HepG2 (cell line): ENCODE measurements at regions of chr11 and their contacts with region 1.

Region 1: GRCh38 chr11:61332797-61333549 is at the starts of genes DDB1 and TKFC:
- DNase-seq: peak; percentile 89
- ATAC-seq: peak; percentile 84
- H3K4me3 ChIP-seq: peak within 1 kb of the TSS; percentile 95 to 98 (median 96)
- H3K27ac ChIP-seq: peak within 1 kb of the TSS; percentile 91
- H3K4me1 ChIP-seq: peaks cover 70% of the 10 kb centered on the region
- H3K27me3 ChIP-seq: no peaks in the 10 kb centered on the region; a peak in 1 of 5 replicates
- CTCF ChIP-seq: peak; percentile 4; the same call in 1 of the 2 replicates
- EP300 ChIP-seq: no peak; a peak in 1 of 4 replicates
- POLR2A ChIP-seq: peak; percentile 94 to 97
- RAD21 ChIP-seq: no peak; the same call in 1 of the 2 replicates
- total RNA-seq, gene DDB1: 266 and 292 TPM in 2 replicates
- total RNA-seq, gene TKFC: 173 and 197 TPM in 2 replicates

Region 2: DNA sequence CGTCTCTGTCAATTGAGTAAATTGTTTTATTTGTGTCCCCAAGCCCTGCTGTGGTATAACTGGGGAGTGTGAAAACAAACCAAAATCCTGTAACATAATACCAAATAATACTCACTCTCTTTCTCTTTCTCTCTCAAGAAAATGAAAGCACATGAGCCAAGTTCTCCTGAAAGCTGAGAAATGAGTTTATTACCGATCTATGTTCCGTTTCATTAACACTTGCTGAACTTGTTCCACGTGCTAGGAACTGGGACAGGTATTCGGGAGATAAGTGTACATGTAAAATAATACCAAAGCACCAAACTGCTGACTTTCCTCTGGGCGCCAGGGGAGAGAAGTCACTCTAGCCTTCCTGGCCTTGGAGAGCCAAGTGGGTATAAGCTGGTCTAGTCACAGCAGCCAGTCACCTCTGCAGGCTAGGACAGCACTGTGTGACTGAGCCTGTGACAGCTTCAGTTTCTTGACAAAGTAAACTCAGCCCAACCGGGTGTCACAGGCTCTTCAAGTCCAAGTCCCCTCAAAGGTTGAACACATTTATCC is 338.4 kb before region 1 on chr11:
- CTCF ChIA-PET with region 1: no interaction called
- POLR2A ChIA-PET with region 1: no interaction called
- in situ Hi-C with region 1: no loop called
- intact Hi-C with region 1: no loop called
- DNase-seq: no peak
- ATAC-seq: no peak; the same call in 2 of the 3 replicates
- H3K4me3 ChIP-seq: no peak overlapping the region
- H3K27ac ChIP-seq: no peak overlapping the region
- H3K4me1 ChIP-seq: peaks cover 20% of the 10 kb centered on the region
- H3K27me3 ChIP-seq: peaks cover 0 to 33% of the 10 kb centered on the region in 2 experiments; a peak in 3 of 5 replicates
- CTCF ChIP-seq: no peak
- EP300 ChIP-seq: no peak
- POLR2A ChIP-seq: no peak
- RAD21 ChIP-seq: no peak

Region 3: DNA sequence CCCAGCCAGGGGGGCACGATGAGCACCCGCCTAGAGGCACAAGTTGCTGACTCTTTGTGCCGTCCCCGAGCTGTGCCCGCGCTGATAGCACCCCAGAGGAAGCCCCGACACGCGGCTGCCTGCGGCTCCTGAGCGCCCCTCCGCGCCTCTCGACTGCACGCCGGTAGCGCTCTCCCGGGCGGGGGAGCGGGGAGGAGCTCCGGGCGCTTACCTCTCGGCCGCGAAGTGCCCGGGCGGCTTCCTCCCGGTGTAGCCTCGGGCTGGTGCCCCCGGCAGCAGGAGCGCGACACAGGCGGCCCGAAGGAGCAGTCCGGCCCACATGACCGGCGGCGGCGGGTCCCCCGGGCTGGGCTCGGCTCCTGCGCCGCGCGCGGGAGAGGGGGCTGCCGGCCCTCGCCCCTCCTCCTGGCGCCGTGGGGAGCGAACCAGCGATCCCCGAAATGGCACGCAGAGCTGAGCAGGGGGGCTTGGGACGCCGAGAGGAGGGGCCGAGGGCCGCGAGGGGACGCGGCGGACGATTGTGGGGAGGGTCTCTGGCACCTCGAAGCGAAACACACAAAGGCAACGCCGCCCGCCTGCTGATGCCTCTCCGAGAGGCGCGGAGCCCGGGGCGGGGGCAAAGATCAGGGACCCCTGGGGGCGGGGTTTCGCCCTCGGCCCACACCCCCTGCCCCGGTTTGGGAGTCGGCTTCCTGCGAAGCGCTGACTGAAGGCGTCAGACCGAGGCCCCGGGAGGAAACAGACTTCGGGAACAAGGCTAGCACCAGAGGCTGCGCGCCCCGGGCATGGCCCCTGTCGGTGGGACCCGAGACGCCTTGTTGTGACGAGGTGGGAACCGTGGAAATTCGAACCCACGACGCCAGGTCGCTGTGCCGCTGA is 38.0 kb before region 1 on chr11 and contains the start of gene VWCE:
- CTCF ChIA-PET with region 1: no interaction called
- POLR2A ChIA-PET with region 1: interaction called, 23 read pairs
- in situ Hi-C with region 1: no loop called
- intact Hi-C with region 1: loop called (anchors 1 kb)
- DNase-seq: peak; percentile 76
- ATAC-seq: peak; percentile 73
- H3K4me3 ChIP-seq: peak within 1 kb of the TSS; percentile 67 to 88 (median 83)
- H3K27ac ChIP-seq: peak within 1 kb of the TSS; percentile 94
- H3K4me1 ChIP-seq: peaks cover 74% of the 10 kb centered on the region
- H3K27me3 ChIP-seq: no peaks in the 10 kb centered on the region; a peak in 1 of 5 replicates
- CTCF ChIP-seq: peak; percentile 65
- EP300 ChIP-seq: no peak
- POLR2A ChIP-seq: peak; percentile 77 to 98
- RAD21 ChIP-seq: no peak; the same call in 1 of the 2 replicates
- total RNA-seq, gene VWCE: 10.4 and 27.6 TPM in 2 replicates

Region 4: DNA sequence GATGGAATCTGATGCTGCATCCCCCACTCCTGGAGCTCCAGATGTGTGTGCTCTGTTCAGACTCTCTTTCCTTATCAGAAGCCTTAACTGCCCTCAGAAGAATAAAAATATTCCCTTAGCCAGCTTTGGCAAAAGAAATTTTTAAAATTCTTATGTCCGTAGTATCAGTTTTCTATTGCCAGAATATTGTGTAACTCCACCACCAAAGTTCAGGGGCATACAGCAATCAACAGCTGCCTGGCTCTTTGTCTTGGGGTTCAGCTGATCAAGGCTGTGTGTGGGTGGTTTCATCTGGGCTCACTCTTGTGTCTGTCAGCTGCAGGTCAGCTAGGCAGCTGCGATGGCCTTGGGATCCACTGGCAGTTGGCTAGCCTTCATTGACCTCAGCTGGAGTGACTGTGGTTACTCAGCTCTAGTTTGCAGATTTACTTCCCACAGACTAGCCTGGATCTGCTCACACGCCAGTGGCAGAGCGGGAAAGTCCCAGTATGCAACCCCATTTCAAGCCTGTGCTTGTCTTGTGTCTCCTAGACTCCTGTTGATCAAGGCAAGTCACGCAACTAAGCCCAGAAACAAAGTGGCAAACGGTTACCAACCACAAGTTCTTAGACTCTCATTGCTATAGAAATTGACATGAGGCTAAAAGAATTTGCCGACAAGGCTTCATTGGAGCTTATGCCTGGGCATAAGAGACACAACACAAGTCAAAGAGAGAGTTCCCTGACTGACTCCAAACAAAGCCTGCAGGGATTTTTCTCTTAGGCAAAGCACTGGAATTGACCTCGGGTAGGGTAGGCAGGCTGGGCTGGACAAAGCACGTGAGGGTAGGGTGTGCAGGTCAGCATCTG is 36.6 kb after region 1 on chr11:
- CTCF ChIA-PET with region 1: no interaction called
- POLR2A ChIA-PET with region 1: interaction called, 146 read pairs
- in situ Hi-C with region 1: no loop called
- intact Hi-C with region 1: no loop called
- DNase-seq: peak; percentile 76
- ATAC-seq: peak; percentile 98
- H3K4me3 ChIP-seq: no peak overlapping the region
- H3K27ac ChIP-seq: peak overlapping the region; percentile 79
- H3K4me1 ChIP-seq: peaks cover 24% of the 10 kb centered on the region
- H3K27me3 ChIP-seq: no peaks in the 10 kb centered on the region
- CTCF ChIP-seq: no peak
- EP300 ChIP-seq: peak; percentile 74 to 83
- POLR2A ChIP-seq: peak; percentile 26 to 31; a peak in 2 of 4 replicates
- RAD21 ChIP-seq: no peak

Region 5: DNA sequence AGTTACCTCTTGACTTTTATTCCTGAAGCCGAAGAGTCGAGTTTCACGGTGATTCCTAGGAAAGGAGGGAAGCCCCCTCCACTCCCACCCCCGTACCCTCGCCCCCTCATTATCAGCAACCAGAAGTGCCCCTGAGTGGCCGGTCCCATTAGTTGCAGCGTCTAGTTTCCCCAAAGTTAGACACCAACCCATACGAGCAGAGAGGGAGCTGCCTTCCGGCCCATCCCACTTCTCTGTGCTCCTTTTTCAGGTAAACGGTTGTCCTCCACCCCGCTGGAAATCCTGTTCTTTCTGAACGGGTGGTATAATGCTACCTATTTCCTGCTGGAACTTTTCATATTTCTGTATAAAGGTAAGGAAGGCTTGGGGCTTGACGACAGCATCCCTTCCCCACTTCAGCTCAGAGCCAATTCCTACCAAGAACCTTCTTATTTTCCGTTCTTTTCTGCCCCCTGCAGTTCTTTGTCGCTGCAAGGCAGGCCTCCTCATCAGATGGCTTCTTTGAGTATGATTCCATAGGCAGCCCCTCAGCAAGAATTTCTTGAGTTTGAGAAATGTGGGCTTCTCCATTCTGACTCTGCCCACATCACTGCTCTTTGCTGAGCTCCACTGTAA is 60.1 kb after region 1 on chr11:
- CTCF ChIA-PET with region 1: interaction called, 5 read pairs
- POLR2A ChIA-PET with region 1: interaction called, 78 read pairs
- in situ Hi-C with region 1: loop called (anchors 5 kb)
- intact Hi-C with region 1: loop called (anchors 2 kb)
- DNase-seq: no peak
- ATAC-seq: peak; percentile 56
- H3K4me3 ChIP-seq: peak overlapping the region; percentile 65 to 95 (median 90)
- H3K27ac ChIP-seq: peak overlapping the region; percentile 84
- H3K4me1 ChIP-seq: peaks cover 21% of the 10 kb centered on the region
- H3K27me3 ChIP-seq: no peaks in the 10 kb centered on the region
- CTCF ChIP-seq: peak; percentile 57
- EP300 ChIP-seq: no peak
- POLR2A ChIP-seq: no peak
- RAD21 ChIP-seq: no peak

Region 6: DNA sequence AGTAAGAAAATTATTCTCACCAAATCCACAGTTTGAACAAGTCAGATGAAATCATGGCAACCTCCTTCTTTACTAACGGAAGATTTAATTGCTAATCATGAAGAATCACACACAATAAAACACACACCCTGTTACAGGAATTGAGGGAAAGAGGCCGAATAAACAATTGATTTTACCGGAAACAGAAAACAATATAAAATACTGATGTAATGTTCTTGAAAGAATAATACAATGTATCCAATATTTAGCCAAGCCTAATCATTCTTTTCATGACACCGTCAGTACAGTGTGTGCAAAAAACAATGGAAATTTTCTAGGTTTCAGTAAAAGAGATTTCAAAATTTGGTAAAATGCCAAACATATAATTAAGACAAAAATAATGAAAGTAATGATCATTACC is 1027.7 kb after region 1 on chr11:
- CTCF ChIA-PET with region 1: no interaction called
- POLR2A ChIA-PET with region 1: no interaction called
- in situ Hi-C with region 1: no loop called
- intact Hi-C with region 1: no loop called
- DNase-seq: no peak
- ATAC-seq: no peak
- H3K4me3 ChIP-seq: no peak overlapping the region
- H3K27ac ChIP-seq: no peak overlapping the region
- H3K4me1 ChIP-seq: no peaks in the 10 kb centered on the region
- H3K27me3 ChIP-seq: no peaks in the 10 kb centered on the region
- CTCF ChIP-seq: no peak
- EP300 ChIP-seq: no peak
- POLR2A ChIP-seq: no peak
- RAD21 ChIP-seq: no peak